AG04449 (cell line): ENCODE measurements at regions of chr1 and their contacts with region 1.

Region 1: DNA sequence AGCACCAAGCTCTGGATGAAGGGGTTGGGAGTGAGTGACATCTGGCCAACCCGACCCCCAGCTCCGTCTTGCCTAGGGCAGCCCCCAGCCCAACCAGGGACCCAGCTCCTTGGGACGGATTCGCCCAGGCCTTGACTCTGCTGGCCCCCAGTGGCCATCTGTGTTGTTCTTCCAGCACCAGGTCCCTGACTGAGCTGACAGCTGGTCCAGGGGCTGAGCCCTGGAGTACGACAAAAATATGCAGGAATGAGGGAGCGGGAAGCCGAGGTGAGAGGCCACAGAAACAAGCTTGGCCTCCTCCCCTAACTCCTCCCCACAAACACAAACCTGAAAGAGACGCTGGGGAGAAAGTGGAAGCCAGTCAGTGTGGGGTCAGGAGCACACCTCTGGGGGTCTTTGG is 55.0 kb upstream of the PAX7 start:
- DNase-seq: no peak
- H3K4me3 ChIP-seq: no peak overlapping the region
- CTCF ChIP-seq: peak; percentile 76

Region 2: DNA sequence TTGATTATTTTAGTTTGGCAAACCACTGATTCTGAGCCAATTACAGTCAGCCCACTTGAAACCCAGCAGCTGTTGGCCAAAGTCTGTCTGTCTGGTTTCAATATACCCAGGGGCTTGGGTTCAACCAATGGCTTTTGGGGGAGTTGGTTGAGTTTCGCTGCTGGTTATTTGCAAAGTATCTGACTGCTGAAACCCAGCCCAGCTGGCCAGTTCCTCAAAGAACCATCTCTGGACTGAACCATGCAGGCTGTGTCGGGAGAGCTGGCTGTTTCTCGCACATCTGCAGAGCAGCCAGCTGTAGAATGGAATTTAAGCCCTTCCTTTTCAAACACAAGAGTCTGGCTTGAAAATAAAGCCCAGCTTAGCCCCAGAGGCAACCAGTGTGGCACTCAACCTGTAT is 10.9 kb before region 1 on chr1:
- CTCF ChIA-PET with region 1: interaction called, 11 read pairs
- POLR2A ChIA-PET with region 1: no interaction called
- DNase-seq: no peak
- H3K4me3 ChIP-seq: no peak overlapping the region
- CTCF ChIP-seq: no peak

Region 3: DNA sequence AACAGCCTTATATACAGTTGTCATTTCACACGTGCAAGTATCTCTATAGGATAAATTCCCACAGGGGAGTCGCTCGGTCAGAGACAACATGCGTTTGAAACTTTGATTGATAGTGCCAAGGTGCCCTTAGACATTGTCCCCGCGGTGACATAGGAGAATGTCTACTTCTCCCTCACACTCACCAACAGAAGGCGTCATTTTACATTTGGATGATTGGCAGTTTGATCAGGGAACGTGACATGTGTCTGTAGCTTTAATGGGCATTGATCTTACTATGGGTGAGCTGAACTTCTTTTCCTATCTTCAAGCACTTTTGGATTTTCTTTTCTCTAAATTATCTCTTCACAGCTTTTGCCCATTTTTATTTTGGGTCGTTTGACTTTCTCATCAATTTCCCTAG is 12.5 kb after region 1 on chr1:
- CTCF ChIA-PET with region 1: interaction called, 24 read pairs
- POLR2A ChIA-PET with region 1: no interaction called
- DNase-seq: no peak
- H3K4me3 ChIP-seq: no peak overlapping the region
- CTCF ChIP-seq: no peak